ENCODE measurements at regions of chr17 and their contacts with region 1.

Region 1: GRCh38 chr17:27544350-27545131 is 86.4 kb upstream of the LGALS9 start:
- DNase-seq: peak; percentile 66
- H3K4me3 Mint-ChIP-seq: peak overlapping the region; percentile 61
- H3K27ac Mint-ChIP-seq: peak overlapping the region; percentile 97
- H3K4me1 Mint-ChIP-seq: peaks cover 84% of the 10 kb centered on the region
- H3K27me3 Mint-ChIP-seq: peaks cover 2% of the 10 kb centered on the region

Region 2: DNA sequence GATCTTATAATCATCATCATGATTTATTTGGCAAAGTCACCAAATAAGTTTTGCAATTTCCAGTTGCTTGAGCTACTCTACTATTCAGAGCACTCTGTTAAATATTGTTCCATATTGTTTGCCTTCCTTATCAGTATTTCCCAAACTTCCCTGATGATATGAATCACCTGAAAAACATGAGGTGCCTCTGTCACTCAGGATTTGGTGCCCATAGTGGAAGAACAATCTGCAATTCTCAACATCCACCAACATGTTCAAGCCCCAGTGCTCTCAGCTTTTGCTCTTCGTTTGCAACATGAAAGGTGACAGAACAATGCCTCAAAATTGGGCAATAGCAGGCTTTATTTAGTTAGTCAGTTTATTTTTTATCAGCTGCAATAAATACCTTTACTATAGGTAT is 279.2 kb before region 1 on chr17:
- intact Hi-C with region 1: no loop called
- DNase-seq: no peak
- H3K4me3 Mint-ChIP-seq: no peak overlapping the region
- H3K27ac Mint-ChIP-seq: no peak overlapping the region
- H3K4me1 Mint-ChIP-seq: no peaks in the 10 kb centered on the region
- H3K27me3 Mint-ChIP-seq: peaks cover 18% of the 10 kb centered on the region

Region 3: GRCh38 chr17:27381007-27381501 is 163.5 kb before region 1 on chr17:
- intact Hi-C with region 1: loop called (anchors 5 kb)
- DNase-seq: peak; percentile 72
- H3K4me3 Mint-ChIP-seq: no peak overlapping the region
- H3K27ac Mint-ChIP-seq: no peak overlapping the region
- H3K4me1 Mint-ChIP-seq: peaks cover 7% of the 10 kb centered on the region
- H3K27me3 Mint-ChIP-seq: peaks cover 29% of the 10 kb centered on the region

Region 4: GRCh38 chr17:27466743-27467375 is 77.7 kb before region 1 on chr17:
- intact Hi-C with region 1: loop called (anchors 1 kb)
- DNase-seq: peak; percentile 74
- H3K4me3 Mint-ChIP-seq: peak overlapping the region; percentile 79
- H3K27ac Mint-ChIP-seq: peak overlapping the region; percentile 97
- H3K4me1 Mint-ChIP-seq: peaks cover 88% of the 10 kb centered on the region
- H3K27me3 Mint-ChIP-seq: no peaks in the 10 kb centered on the region

Region 5: DNA sequence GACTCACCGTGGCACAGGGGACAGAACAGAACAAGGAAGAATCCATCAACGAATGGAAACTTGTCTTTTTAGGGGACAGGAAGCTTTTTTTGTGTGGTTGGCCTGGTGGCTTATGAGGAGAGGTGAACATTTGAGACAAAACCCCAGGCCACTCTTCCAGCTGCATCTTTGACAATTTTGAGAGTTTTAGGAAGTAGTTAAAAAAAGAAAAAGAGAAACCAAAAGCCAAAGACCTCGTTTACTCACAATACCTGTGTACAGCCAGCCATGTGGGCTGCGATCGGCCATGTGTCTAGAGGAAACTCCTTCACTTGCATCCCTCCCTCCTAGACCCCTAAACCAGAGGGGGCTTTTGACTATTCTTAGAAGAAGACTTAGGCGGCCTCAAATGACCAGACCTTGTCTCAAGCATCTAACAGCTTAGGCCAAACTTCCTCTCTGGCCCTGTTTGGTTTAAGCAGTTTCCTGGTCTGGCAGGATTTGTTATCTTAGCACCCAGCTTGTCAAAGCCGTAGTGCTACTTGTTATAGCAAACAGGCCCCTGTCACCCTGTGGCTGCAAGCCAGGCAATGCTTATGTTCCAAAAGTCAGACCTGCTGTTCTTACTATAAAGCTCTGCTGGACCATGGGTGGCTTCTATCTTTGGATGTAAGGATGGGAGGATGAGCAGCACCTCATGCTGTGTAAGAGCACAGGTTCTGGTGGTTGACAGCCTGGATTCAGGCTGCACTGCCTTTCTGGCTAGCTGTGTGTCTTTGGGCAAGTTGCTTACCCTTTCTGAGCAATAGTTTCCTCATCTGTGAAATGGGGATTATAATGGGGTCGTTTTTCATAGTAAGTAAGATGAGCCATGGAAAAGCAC is 70.6 kb before region 1 on chr17:
- intact Hi-C with region 1: loop called (anchors 1 kb)
- DNase-seq: peak; percentile 83
- H3K4me3 Mint-ChIP-seq: peak overlapping the region; percentile 58
- H3K27ac Mint-ChIP-seq: peak overlapping the region; percentile 97
- H3K4me1 Mint-ChIP-seq: peaks cover 95% of the 10 kb centered on the region
- H3K27me3 Mint-ChIP-seq: no peaks in the 10 kb centered on the region

Region 6: GRCh38 chr17:27489045-27489715 is 55.4 kb before region 1 on chr17:
- intact Hi-C with region 1: no loop called
- DNase-seq: no peak
- H3K4me3 Mint-ChIP-seq: no peak overlapping the region
- H3K27ac Mint-ChIP-seq: peak overlapping the region; percentile 76
- H3K4me1 Mint-ChIP-seq: peaks cover 70% of the 10 kb centered on the region
- H3K27me3 Mint-ChIP-seq: no peaks in the 10 kb centered on the region

Region 7: GRCh38 chr17:27526604-27527230 is 17.8 kb before region 1 on chr17:
- intact Hi-C with region 1: loop called (anchors 1 kb)
- DNase-seq: peak; percentile 54
- H3K4me3 Mint-ChIP-seq: peak overlapping the region; percentile 68
- H3K27ac Mint-ChIP-seq: peak overlapping the region; percentile 76
- H3K4me1 Mint-ChIP-seq: peaks cover 94% of the 10 kb centered on the region
- H3K27me3 Mint-ChIP-seq: no peaks in the 10 kb centered on the region

Region 8: DNA sequence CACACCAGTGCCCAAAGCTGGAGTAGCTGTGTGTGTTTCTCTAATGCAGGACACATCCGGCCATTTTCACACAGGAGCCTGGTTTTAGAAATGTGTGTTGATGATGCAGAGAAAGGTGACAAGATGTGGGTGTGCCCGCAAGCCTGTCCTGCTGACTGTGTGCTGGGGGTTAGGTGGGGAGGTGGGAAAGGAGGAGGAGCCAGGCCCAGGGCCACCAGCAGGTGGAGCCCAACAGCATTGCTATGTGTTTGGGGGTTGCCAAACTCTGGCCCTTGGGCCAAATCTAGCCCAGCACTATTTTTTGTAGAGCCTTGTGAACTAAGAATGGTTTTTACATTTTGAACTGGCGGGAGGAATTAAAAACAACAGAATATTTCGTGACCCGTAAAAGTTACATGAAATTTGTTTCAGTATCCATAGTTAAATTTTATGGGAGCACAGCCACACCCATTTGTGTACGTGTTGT is 24.7 kb after region 1 on chr17:
- intact Hi-C with region 1: loop called (anchors 1 kb)
- DNase-seq: peak; percentile 26
- H3K4me3 Mint-ChIP-seq: no peak overlapping the region
- H3K27ac Mint-ChIP-seq: peak overlapping the region; percentile 70
- H3K4me1 Mint-ChIP-seq: peaks cover 90% of the 10 kb centered on the region
- H3K27me3 Mint-ChIP-seq: no peaks in the 10 kb centered on the region

Region 9: DNA sequence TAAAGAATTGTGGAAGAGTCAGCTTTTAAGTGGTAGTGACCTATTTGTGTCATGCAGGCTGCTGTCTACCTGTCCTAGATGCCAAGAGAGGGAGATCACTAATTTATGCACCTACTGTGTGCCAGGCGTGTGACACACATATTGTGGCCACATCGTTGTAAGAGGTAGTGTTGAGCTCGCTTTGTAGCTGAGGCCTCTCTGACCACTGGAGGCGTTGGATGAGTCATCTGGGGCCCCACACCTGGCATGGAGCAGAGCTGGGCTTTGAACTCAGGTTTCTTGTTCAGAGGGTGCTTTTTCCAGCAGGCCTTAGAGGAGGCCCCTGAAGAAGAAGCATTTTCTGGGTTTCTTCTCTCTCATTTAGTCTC is 34.2 kb after region 1 on chr17:
- intact Hi-C with region 1: loop called (anchors 1 kb)
- DNase-seq: peak; percentile 62
- H3K4me3 Mint-ChIP-seq: peak overlapping the region; percentile 3
- H3K27ac Mint-ChIP-seq: peak overlapping the region; percentile 90
- H3K4me1 Mint-ChIP-seq: peaks cover 77% of the 10 kb centered on the region
- H3K27me3 Mint-ChIP-seq: no peaks in the 10 kb centered on the region